ENCODE measurements at regions of chr9 and their contacts with region 1.

Region 1: GRCh38 chr9:128881901-128882681 is at the starts of genes KYAT1 and LRRC8A:
- DNase-seq: peak; percentile 97
- ATAC-seq: peak; percentile 92
- H3K4me3 ChIP-seq: peak within 1 kb of the TSS; percentile 88 to 95 (median 91)
- H3K4me3 Mint-ChIP-seq: peak within 1 kb of the TSS; percentile 98
- H3K27ac ChIP-seq: peak within 1 kb of the TSS; percentile 51 to 83
- H3K27ac Mint-ChIP-seq: peak within 1 kb of the TSS; percentile 99
- H3K4me1 ChIP-seq: peaks cover 15 to 37% of the 10 kb centered on the region in 2 donors
- H3K4me1 Mint-ChIP-seq: peaks cover 38% of the 10 kb centered on the region
- H3K27me3 ChIP-seq: no peaks in the 10 kb centered on the region
- H3K27me3 Mint-ChIP-seq: no peaks in the 10 kb centered on the region
- CTCF ChIP-seq: peak; percentile 26
- total RNA-seq, gene KYAT1: 6.4 and 7.0 TPM in 2 replicates
- total RNA-seq, gene LRRC8A: 14.5 and 15.1 TPM in 2 replicates

Region 2: DNA sequence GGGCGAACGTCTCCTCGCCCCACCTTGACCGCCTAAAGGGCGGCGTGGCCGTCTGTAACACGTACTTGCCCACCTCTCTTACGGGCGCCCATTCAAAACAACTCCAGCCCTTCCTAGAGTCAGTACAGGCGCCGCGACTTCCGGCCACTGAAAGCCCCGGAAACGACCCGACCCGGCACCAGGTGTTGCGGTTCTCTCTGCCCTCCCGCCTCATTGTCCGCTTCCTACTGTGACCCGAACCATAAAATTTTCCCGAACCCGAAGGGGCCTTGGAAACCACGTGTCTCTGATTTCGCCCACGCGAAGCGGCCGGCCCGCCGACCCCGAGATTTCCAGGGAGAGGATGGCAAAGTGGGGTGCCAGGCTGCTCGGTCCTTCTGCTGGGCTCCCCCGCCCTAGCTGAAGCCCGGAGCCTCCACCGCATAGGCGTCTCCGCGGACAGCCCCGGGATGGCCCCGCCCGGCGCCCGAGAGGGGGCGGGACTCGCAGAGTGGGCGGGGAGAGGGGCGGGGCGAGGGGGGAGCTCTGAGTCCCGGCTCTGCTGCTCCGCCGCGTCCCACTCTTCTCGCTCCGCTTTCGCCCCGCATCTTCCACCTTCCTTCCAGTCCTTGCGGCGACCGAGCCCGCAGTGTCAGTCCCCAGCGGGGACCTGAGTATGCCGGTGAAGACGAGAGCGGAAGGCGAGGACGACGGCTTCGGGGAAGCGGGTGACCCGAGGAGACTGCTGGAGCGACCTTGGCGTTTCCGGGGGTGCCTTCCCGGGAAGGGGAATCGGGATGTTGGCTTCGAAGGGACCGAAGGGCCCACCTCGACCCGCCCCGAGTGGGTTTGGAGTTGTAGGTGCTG is 753.9 kb before region 1 on chr9:
- CTCF ChIA-PET with region 1: no interaction called
- POLR2A ChIA-PET with region 1: no interaction called
- intact Hi-C with region 1: loop called (anchors 5 kb)
- DNase-seq: peak; percentile 97
- ATAC-seq: peak; percentile 78
- H3K4me3 ChIP-seq: peak overlapping the region; percentile 58 to 97 (median 83)
- H3K4me3 Mint-ChIP-seq: peak overlapping the region; percentile 95
- H3K27ac ChIP-seq: peak overlapping the region; percentile 93 to 99
- H3K27ac Mint-ChIP-seq: peak overlapping the region; percentile 99
- H3K4me1 ChIP-seq: peaks cover 26 to 34% of the 10 kb centered on the region in 2 donors
- H3K4me1 Mint-ChIP-seq: peaks cover 35% of the 10 kb centered on the region
- H3K27me3 ChIP-seq: peaks cover 0 to 6% (median 0%) of the 10 kb centered on the region in 4 experiments
- H3K27me3 Mint-ChIP-seq: peaks cover 7% of the 10 kb centered on the region
- CTCF ChIP-seq: no peak

Region 3: DNA sequence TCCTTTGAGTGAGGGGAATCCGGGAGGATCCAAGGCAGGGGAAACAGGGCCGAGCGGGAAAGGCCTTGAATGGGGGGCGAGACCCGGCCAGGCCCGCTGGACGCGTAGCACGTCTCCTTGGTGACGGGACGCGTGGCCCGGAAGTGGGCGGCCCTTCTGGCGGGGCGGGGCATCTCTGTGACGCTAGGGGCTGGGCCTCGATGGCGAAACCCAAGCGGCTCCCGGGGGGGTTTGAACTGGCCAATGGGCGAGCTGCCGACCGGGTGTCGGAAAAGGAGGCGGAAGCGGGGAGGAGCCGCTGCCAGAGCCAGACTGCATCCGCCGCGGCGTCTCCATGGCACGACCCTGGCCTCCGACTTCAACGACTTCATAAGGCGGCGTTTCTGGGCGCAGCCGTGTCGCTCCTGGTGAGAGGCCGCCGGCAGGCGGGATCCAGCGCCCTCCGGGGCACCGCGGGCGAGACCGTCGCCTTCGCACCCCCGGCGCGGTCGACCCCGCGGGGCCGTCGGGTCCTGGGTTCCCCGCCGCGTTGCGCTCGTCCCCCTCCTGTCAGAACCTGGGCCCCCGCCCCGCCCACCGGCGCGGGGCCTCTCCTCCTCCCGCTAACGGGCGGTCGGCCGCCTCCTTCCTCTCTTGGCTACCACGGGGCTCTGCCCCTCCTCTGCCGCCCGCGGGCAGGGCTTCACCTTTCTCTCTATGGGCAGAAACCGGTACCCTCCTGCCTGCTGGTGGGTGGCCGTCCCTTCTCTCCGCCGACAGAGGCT is 426.1 kb before region 1 on chr9 and contains the start of gene ODF2:
- CTCF ChIA-PET with region 1: no interaction called
- POLR2A ChIA-PET with region 1: no interaction called
- intact Hi-C with region 1: loop called (anchors 5 kb)
- DNase-seq: peak; percentile 98
- ATAC-seq: peak; percentile 85
- H3K4me3 ChIP-seq: peak within 1 kb of the TSS; percentile 23 to 89 (median 81)
- H3K4me3 Mint-ChIP-seq: peak within 1 kb of the TSS; percentile 93
- H3K27ac ChIP-seq: peak within 1 kb of the TSS; percentile 65 to 92
- H3K27ac Mint-ChIP-seq: peak within 1 kb of the TSS; percentile 93
- H3K4me1 ChIP-seq: peaks cover 8 to 13% of the 10 kb centered on the region in 2 donors
- H3K4me1 Mint-ChIP-seq: peaks cover 18% of the 10 kb centered on the region
- H3K27me3 ChIP-seq: no peaks in the 10 kb centered on the region
- H3K27me3 Mint-ChIP-seq: no peaks in the 10 kb centered on the region
- CTCF ChIP-seq: no peak
- total RNA-seq, gene ODF2: 36.6 and 42.9 TPM in 2 replicates

Region 4: GRCh38 chr9:128818099-128818838 is 63.8 kb before region 1 on chr9 and contains the start of gene ENDOG:
- CTCF ChIA-PET with region 1: interaction called, 7 read pairs
- POLR2A ChIA-PET with region 1: interaction called, 5 read pairs
- intact Hi-C with region 1: loop called (anchors 1 kb)
- DNase-seq: peak; percentile 97
- ATAC-seq: peak; percentile 95
- H3K4me3 ChIP-seq: peak within 1 kb of the TSS; percentile 68 to 76 (median 69)
- H3K4me3 Mint-ChIP-seq: peak within 1 kb of the TSS; percentile 95
- H3K27ac ChIP-seq: peak within 1 kb of the TSS in 1 of 2 donors; percentile 53
- H3K27ac Mint-ChIP-seq: peak within 1 kb of the TSS; percentile 94
- H3K4me1 ChIP-seq: peaks cover 5 to 16% of the 10 kb centered on the region in 2 donors
- H3K4me1 Mint-ChIP-seq: peaks cover 14% of the 10 kb centered on the region
- H3K27me3 ChIP-seq: no peaks in the 10 kb centered on the region
- H3K27me3 Mint-ChIP-seq: no peaks in the 10 kb centered on the region
- CTCF ChIP-seq: peak; percentile 95
- total RNA-seq, gene ENDOG: 17.1 and 19.3 TPM in 2 replicates

Region 5: GRCh38 chr9:128902351-128903078 is 20.4 kb after region 1 on chr9:
- CTCF ChIA-PET with region 1: interaction called, 4 read pairs
- POLR2A ChIA-PET with region 1: interaction called, 5 read pairs
- intact Hi-C with region 1: loop called (anchors 1 kb)
- DNase-seq: peak; percentile 87
- ATAC-seq: peak; percentile 95
- H3K4me3 ChIP-seq: peak overlapping the region in 4 of 5 experiments; percentile 25 to 45 (median 29)
- H3K4me3 Mint-ChIP-seq: peak overlapping the region; percentile 74
- H3K27ac ChIP-seq: peak overlapping the region; percentile 93
- H3K27ac Mint-ChIP-seq: peak overlapping the region; percentile 98
- H3K4me1 ChIP-seq: peaks cover 40 to 56% of the 10 kb centered on the region in 2 donors
- H3K4me1 Mint-ChIP-seq: peaks cover 37% of the 10 kb centered on the region
- H3K27me3 ChIP-seq: no peaks in the 10 kb centered on the region
- H3K27me3 Mint-ChIP-seq: no peaks in the 10 kb centered on the region
- CTCF ChIP-seq: no peak

Region 6: DNA sequence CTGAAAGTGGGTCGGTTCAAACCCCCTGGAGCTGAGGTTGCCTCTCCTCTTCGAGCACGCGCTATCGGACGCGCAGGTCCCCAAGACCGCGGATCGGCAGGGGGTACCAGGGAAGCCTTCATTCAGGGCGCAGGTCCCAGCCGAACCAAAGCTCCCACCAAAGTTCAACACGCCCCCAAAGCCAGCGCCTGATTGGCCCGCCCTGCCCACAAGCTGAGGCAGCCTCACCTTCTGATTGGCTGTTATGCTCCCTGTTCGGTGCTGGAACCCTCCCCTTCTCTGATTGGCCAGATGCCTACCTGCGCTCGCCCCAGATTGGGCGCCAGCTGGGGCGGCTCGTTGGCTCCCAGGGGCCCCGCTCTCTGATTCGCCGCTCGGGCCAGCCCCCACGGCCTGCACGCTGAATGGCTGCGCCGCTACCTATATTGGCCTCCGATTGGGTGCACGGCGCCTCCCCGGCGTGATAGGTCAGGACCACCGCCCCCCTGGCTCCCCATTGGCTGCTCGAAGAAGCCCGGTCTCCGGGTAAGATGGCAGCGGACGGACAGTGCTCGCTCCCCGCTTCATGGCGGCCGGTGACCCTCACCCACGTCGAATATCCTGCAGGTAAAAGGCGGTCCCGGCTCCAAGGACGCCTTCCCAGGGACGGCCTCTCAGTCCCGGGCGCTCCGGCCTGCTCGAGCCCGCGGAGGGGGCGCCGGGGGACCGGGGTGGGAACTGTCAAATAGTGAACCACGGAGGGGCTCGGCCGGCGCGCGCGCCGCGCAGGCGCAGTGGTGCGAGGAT is 198.7 kb after region 1 on chr9 and contains the start of gene DOLPP1:
- CTCF ChIA-PET with region 1: no interaction called
- POLR2A ChIA-PET with region 1: no interaction called
- intact Hi-C with region 1: loop called (anchors 1 kb)
- DNase-seq: peak; percentile 99
- ATAC-seq: peak; percentile 92
- H3K4me3 ChIP-seq: peak within 1 kb of the TSS; percentile 67 to 90 (median 75)
- H3K4me3 Mint-ChIP-seq: peak within 1 kb of the TSS; percentile 91
- H3K27ac ChIP-seq: peak within 1 kb of the TSS; percentile 42 to 79
- H3K27ac Mint-ChIP-seq: peak within 1 kb of the TSS; percentile 88
- H3K4me1 ChIP-seq: peaks cover 16 to 20% of the 10 kb centered on the region in 2 donors
- H3K4me1 Mint-ChIP-seq: peaks cover 23% of the 10 kb centered on the region
- H3K27me3 ChIP-seq: no peaks in the 10 kb centered on the region
- H3K27me3 Mint-ChIP-seq: no peaks in the 10 kb centered on the region
- CTCF ChIP-seq: no peak
- total RNA-seq, gene DOLPP1: 4.7 and 7.1 TPM in 2 replicates